Activated naive CD4-positive, alpha-beta T cell treated with anti-CD3 and anti-CD28 coated beads, Interleukin-2, amount 10 ng/mL, durations not matched to agents 7 days and 5 days (primary cell): ENCODE measurements at regions of chr11 and their contacts with region 1.

Region 1: GRCh38 chr11:117985953-117986887 is at the start of gene IL10RA:
- DNase-seq: peak; percentile 87
- H3K4me3 Mint-ChIP-seq: peak within 1 kb of the TSS; percentile 82
- H3K27ac Mint-ChIP-seq: peak within 1 kb of the TSS; percentile 97
- H3K4me1 Mint-ChIP-seq: peaks cover 73% of the 10 kb centered on the region
- H3K27me3 Mint-ChIP-seq: no peaks in the 10 kb centered on the region

Region 2: DNA sequence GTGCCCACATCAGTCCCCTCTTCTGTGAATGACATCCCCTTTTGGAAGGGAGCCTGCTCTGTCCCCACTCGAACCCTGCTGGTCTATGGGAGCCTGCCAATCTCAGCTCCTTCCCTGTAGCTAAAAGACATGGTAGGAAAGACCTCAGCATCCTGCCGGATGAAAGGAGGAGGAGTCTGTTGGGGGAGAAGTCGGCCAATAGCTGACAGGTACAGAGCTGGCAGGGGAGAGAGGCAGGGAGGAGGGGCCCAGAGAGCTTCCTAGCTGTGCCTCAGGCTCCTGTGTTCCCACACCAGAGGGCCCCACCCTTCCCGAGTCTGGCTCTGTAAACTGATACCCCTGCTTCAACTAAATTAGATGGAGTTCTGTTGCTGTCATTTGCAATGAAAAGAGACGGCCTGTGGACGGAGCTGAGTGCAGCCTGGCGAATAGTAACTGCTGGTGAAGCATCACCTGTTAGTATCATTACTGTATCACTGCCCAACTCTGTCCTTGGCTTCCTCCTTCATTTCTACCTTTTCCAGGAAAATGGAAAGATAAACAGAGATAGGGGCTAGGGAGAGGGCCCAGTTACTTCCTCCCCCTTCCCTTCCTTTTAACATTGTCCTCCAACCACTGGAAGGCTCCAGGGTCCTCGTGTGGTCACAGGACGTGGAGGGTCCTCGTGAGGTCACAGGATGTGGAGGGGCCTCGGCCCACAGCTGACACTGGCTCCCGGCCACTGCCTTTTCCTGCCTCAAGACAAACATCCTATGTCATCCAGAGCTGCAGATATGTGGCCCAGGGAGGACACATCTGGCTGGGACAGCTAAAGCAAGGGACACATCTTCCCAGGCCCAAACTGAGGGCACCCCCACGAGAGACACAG is 124.8 kb before region 1 on chr11:
- CTCF ChIA-PET with region 1: no interaction called
- DNase-seq: no peak
- H3K4me3 Mint-ChIP-seq: no peak overlapping the region
- H3K27ac Mint-ChIP-seq: no peak overlapping the region
- H3K4me1 Mint-ChIP-seq: peaks cover 2% of the 10 kb centered on the region
- H3K27me3 Mint-ChIP-seq: peaks cover 31% of the 10 kb centered on the region

Region 3: DNA sequence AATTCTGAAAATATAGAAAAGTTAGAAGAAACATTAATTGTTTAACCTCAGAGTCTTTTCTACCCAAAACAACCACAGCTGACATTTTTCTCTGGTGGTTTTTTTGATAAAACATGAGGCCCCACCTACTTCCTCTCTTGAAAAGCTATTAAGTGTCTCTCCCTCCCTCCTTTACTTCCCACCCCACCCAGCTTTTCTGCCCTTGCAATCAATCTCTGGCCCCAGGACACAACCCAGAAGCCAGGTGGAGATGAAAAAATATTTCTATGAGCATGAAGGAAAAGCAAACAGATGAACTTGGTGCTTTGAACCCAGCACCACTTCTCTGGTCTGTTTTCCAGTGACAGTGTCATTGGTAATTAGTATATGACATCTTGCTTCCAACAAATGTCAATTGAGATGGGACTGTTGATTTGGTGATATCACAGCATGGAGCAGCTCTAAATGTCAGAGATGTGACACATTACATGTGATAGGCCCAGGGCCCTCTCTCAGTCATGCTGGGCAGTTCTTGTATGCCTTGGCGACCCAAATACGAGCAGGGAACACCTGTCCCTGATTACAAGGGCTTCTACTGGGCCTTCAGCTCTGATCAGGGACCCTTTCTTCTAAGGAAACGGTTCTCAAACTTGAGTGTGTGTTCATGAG is 33.1 kb before region 1 on chr11:
- CTCF ChIA-PET with region 1: interaction called, 30 read pairs
- DNase-seq: peak; percentile 59
- H3K4me3 Mint-ChIP-seq: peak overlapping the region; percentile 32
- H3K27ac Mint-ChIP-seq: peak overlapping the region; percentile 98
- H3K4me1 Mint-ChIP-seq: peaks cover 72% of the 10 kb centered on the region
- H3K27me3 Mint-ChIP-seq: no peaks in the 10 kb centered on the region

Region 4: DNA sequence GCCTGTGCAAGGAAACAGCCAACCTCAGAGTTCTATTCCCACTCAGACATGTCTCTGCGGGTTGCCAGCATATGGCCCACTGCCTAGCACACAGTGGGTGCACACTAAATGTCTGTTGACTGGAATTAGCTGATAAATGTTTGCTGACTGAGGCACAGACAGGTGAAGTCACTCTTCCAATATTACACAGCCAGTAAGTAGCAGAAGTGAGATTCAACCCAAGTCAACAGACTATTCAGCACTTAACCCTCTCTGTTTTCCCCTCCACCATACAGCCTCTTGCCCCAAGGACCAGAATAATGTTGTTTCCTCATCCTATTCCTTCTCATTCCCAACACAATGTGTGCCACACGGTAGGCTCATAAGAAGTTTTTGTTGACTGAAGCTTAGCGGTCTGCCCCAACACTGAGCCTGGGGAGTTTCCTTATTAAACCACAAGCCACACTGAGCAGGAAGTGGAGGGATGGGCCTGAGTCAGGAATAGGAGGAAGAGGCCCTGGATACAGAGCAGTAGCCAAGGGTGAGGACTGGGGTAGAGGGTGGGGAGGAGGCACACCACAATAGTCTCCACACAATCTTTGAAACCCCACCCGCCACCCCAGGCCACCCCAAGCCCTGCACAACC is 15.7 kb before region 1 on chr11:
- CTCF ChIA-PET with region 1: no interaction called
- DNase-seq: peak; percentile 58
- H3K4me3 Mint-ChIP-seq: no peak overlapping the region
- H3K27ac Mint-ChIP-seq: peak overlapping the region; percentile 50
- H3K4me1 Mint-ChIP-seq: peaks cover 58% of the 10 kb centered on the region
- H3K27me3 Mint-ChIP-seq: peaks cover 5% of the 10 kb centered on the region

Region 5: DNA sequence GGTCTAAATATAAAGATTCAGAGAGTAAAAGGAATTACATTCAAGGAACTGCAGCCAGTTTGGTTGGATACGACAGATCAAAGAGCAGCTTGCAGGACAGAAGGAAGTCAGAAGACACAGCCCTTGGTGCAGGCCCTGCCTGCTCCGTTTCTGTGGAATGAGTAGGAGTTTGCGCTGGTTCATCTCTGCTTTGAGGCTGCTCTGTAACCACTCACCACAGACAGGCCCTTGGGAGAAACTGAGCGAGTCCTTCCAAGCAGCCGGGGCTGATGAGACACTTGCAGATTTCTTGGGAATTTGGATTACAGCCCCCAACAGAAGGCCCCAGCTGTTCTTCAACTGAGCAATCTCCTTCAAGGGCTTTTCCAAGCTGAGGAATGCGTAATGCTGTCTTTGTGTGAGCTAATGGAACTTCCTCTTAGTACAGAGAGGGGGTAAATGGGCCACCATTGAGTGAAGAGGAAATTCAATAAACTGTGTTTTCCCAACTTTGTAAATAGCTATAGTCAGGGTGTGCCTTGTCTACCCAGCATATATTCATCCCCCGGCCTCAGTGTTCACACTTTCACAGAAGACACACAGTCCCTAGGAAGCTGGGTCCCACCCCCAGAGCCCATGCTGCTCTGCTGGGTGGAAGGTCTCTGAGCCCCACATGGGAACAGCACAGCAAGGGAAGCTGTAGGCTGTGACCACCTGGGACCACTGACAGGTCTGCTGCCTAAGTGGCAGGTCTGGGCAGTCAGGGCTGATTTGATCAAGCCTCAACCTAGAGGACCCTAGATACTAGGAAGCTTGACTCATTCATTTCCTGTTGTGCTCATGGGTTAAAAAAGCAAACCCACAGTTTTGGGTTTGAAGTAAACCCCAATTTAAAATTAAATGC is 16.6 kb after region 1 on chr11:
- CTCF ChIA-PET with region 1: interaction called, 29 read pairs
- DNase-seq: peak; percentile 64
- H3K4me3 Mint-ChIP-seq: peak overlapping the region; percentile 56
- H3K27ac Mint-ChIP-seq: peak overlapping the region; percentile 98
- H3K4me1 Mint-ChIP-seq: peaks cover 100% of the 10 kb centered on the region
- H3K27me3 Mint-ChIP-seq: no peaks in the 10 kb centered on the region

Region 6: GRCh38 chr11:118263695-118264567 is 277.7 kb after region 1 on chr11 and contains the start of gene MPZL2:
- CTCF ChIA-PET with region 1: no interaction called
- DNase-seq: peak; percentile 50
- H3K4me3 Mint-ChIP-seq: peak within 1 kb of the TSS; percentile 72
- H3K27ac Mint-ChIP-seq: peak within 1 kb of the TSS; percentile 58
- H3K4me1 Mint-ChIP-seq: peaks cover 56% of the 10 kb centered on the region
- H3K27me3 Mint-ChIP-seq: peaks cover 30% of the 10 kb centered on the region